ENCODE measurements at regions of chr2 and their contacts with region 1.

Region 1: DNA sequence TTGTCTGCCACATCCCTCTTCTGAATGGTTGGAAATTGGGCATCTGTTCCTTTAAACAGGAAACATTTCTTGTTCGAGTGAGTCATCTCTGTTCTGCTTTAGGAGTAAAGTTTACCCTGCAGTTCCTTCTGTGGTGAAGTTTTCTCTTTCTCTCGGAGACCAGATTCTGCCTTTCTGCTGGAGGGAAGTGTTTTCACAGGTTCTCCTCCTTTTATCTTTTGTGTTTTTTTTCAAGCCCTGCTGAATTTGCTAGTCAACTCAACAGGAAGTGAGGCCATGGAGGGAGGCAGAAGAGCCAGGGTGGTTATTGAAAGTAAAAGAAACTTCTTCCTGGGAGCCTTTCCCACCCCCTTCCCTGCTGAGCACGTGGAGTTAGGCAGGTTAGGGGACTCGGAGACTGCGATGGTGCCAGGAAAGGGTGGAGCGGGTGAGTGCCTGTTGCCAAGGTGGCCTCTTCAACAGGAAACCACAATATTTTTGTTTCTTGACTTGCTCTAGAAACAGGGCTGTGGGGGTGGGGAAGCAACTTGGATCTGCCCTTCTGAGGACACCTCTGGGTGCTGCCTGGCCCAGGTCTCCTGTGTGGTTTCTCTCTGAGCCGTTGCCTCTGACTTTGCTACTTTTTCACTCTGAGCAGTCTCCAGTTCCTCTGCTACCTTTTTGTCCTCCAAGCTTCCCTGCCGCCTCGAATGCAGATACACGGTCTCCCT is 2.2 kb upstream of the CASP8 start:
- DNase-seq: peak; percentile 93
- H3K4me3 Mint-ChIP-seq: peak overlapping the region; percentile 91
- H3K27ac Mint-ChIP-seq: peak overlapping the region; percentile 100
- H3K4me1 Mint-ChIP-seq: peaks cover 84% of the 10 kb centered on the region
- H3K27me3 Mint-ChIP-seq: no peaks in the 10 kb centered on the region

Region 2: DNA sequence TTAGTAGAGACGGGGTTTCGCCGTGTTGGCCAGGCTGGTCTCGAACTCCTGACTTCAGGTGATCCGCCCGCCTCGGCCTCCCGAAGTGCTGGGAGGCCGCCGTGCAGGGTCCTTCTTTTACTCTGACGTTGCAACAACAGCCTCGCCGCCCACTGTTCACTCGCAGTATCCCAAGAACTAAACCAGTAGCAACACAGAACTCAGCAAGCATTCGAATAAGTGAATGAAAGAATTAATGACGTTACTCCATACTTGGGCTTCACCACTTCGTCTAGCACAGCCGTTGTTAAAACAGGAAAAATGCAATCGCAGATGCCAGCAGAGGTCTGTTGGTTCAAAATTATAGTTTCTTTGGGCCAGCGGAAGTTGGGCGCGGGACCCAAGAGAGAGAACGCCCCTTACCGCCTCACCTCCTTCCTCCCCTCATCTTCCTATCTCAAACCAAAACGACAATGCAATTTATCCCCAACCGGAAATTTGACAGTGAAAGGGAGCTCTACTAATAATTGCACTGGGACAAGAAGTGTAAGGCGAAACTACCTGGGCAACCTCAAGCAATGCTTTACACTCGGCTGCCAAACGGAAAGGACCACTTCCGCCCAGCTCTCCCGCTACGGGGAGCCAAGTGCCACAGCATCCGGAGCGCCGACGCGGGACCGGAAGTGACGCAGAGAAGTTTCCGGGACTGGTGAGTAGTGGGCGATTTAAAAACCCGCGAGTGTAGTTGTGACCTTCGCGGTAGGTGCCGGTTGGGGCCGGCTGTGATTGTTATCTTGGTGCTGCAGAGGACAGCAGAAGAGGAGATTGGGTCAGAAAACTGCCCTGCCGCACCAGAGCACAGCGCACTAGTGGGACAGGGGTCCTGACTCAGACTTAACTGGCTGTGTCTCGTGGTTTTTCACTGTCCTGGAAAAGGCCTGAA is 369.1 kb before region 1 on chr2 and contains the starts of genes NIF3L1 and PPIL3:
- intact Hi-C with region 1: loop called (anchors 1 kb)
- DNase-seq: peak; percentile 96
- H3K4me3 Mint-ChIP-seq: peak within 1 kb of the TSS; percentile 97
- H3K27ac Mint-ChIP-seq: peak within 1 kb of the TSS; percentile 99
- H3K4me1 Mint-ChIP-seq: peaks cover 54% of the 10 kb centered on the region
- H3K27me3 Mint-ChIP-seq: no peaks in the 10 kb centered on the region
- total RNA-seq, gene NIF3L1: 26.6 and 27.3 TPM in 2 replicates
- total RNA-seq, gene PPIL3: 44.2 TPM in 2 replicates

Region 3: GRCh38 chr2:201182650-201183364 is 75.3 kb before region 1 on chr2 and contains the start of gene CASP10:
- intact Hi-C with region 1: loop called (anchors 1 kb)
- DNase-seq: peak; percentile 48
- H3K4me3 Mint-ChIP-seq: peak within 1 kb of the TSS; percentile 96
- H3K27ac Mint-ChIP-seq: peak within 1 kb of the TSS; percentile 90
- H3K4me1 Mint-ChIP-seq: peaks cover 65% of the 10 kb centered on the region
- H3K27me3 Mint-ChIP-seq: peaks cover 4% of the 10 kb centered on the region
- total RNA-seq, gene CASP10: 13.5 and 15.7 TPM in 2 replicates

Region 4: GRCh38 chr2:201363857-201364560 is 105.9 kb after region 1 on chr2:
- intact Hi-C with region 1: loop called (anchors 1 kb)
- DNase-seq: peak; percentile 30
- H3K4me3 Mint-ChIP-seq: no peak overlapping the region
- H3K27ac Mint-ChIP-seq: no peak overlapping the region
- H3K4me1 Mint-ChIP-seq: peaks cover 45% of the 10 kb centered on the region
- H3K27me3 Mint-ChIP-seq: no peaks in the 10 kb centered on the region

Region 5: DNA sequence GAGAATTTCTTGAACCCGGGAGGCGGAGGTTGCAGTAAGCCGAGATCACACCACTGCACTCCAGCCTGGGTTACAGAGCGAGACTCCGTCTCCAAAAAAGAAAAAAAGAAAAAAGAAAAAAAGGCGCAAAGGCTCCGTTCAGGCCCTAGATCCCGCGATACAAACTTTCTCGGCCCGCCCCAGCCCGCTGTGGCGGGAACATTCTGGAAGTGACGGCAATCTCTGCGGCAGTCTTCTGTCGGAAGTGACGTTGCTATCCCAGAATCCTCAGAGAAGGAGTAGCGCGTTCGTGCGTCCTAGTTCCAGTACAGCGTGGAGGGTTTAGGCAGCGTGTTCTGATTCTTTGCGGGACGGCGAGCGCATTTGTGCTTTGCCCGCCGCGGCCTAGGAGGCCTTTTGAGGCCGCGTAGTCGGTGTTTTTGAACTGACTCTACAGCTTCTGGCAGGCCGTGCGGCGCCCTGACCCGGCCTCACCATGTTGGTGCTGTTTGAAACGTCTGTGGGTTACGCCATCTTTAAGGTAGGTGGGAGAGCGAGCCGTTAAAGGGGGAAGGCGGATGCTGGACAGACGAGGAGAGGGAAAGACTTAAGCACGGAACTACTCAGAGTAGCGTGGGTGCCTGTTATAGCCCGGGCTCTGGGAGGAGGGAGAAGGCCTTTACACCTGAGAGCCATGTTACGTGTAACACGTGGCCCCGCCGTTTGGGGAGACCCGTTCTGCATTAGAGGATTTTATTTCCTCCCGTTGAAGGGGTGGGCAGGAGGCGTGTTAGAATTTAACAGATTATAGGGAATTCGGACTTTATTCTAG is 1007.6 kb after region 1 on chr2 and contains the start of gene NOP58:
- intact Hi-C with region 1: loop called (anchors 2 kb)
- DNase-seq: peak; percentile 91
- H3K4me3 Mint-ChIP-seq: peak within 1 kb of the TSS; percentile 55
- H3K27ac Mint-ChIP-seq: peak within 1 kb of the TSS; percentile 45
- H3K4me1 Mint-ChIP-seq: peaks cover 19% of the 10 kb centered on the region
- H3K27me3 Mint-ChIP-seq: no peaks in the 10 kb centered on the region
- total RNA-seq, gene NOP58: 227 and 241 TPM in 2 replicates